K562 (cell line): ENCODE measurements at regions of chr2 and their contacts with region 1.

Region 1: GRCh38 chr2:157302492-157303099 is 23.0 kb downstream of the ERMN start:
- DNase-seq: peak; percentile 68 to 76 (median 71)
- ATAC-seq: peak; percentile 82
- H3K4me3 ChIP-seq: no peak overlapping the region
- H3K27ac ChIP-seq: no peak overlapping the region
- H3K4me1 ChIP-seq: peaks cover 0 to 17% of the 10 kb centered on the region in 2 experiments; a peak in 2 of 5 replicates
- H3K27me3 ChIP-seq: no peaks in the 10 kb centered on the region
- CTCF ChIP-seq: peak; percentile 76 to 92 (median 79)
- EP300 ChIP-seq: peak; percentile 30; the same call in 1 of the 2 replicates
- POLR2A ChIP-seq: no peak
- RAD21 ChIP-seq: peak; percentile 88 to 89

Region 2: DNA sequence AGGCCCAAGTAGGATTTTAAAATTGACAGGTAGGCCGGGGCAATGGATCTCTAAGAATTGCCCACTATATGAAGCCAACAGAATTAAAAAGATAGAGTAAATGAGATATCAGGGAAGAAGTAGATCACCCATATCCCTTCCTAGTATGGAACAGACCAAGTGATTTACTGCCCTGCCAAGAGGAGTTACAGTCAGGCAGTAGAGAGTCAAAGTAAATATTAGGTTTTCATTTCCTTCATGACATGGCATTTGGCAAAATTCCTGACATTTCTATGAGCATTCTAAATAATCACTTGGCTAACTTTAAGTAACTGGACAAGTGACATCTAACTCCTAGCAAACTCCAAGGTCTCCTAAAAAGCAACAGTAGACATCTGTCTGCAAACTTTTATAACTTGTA is 11.6 kb before region 1 on chr2:
- CTCF ChIA-PET with region 1: no interaction called
- POLR2A ChIA-PET with region 1: interaction called, 10 read pairs
- in situ Hi-C with region 1: no loop called
- intact Hi-C with region 1: no loop called
- DNase-seq: no peak
- ATAC-seq: no peak
- H3K4me3 ChIP-seq: no peak overlapping the region
- H3K27ac ChIP-seq: no peak overlapping the region
- H3K4me1 ChIP-seq: peaks cover 0 to 3% of the 10 kb centered on the region in 2 experiments; a peak in 2 of 5 replicates
- H3K27me3 ChIP-seq: no peaks in the 10 kb centered on the region
- CTCF ChIP-seq: no peak
- EP300 ChIP-seq: no peak
- POLR2A ChIP-seq: no peak
- RAD21 ChIP-seq: no peak

Region 3: DNA sequence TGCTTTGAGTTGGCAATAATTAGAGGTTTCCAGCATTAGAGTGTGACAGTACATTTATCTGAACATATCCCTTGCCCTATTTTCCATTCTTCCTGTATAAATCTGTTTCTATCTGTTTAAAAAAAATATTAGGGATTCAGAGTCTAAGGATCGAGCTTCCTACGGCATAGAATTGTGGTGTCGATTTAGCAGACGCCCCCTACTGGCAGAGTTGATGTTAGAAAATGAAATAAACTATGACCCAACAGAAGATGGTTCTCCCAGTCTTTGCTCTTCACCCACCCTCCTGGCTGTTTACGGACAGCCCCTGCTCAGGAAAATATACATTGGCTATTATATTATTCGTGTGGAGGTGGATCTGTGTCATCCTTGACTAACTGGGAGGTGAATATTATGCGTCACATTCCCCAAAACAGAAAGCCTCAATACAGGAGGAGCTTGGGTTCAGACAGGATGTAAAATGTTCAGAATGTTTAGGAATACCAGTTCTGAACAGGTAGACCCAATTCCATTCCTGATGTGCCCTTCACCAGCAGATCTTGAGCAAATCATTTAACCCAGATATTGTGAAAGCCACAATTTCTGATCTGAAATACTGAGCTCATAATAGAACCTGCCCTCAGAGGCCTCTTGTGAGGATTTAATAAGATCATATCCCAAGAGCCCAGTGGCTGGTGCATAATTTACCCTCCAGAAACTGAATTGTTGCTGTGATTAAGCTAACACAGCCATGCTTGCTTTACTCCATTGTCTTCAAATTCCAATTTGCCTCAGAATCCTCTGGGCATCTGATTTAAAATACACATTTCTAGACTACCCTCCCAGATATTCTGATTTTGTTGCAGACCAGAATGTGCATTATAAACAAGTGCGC is 33.8 kb after region 1 on chr2:
- CTCF ChIA-PET with region 1: interaction called, 11 read pairs
- POLR2A ChIA-PET with region 1: interaction called, 3 read pairs
- in situ Hi-C with region 1: no loop called
- intact Hi-C with region 1: loop called (anchors 1 kb)
- DNase-seq: peak; percentile 53 to 77 (median 68)
- ATAC-seq: peak; percentile 90
- H3K4me3 ChIP-seq: no peak overlapping the region
- H3K27ac ChIP-seq: no peak overlapping the region
- H3K4me1 ChIP-seq: no peaks in the 10 kb centered on the region
- H3K27me3 ChIP-seq: 0 out of 5 replicates have a peak, but pooled peaks cover 0 to 3% of the 10 kb centered on the region in 2 experiments
- CTCF ChIP-seq: peak; percentile 58 to 79 (median 74); a peak in 5 of 6 replicates
- EP300 ChIP-seq: no peak
- POLR2A ChIP-seq: no peak
- RAD21 ChIP-seq: peak; percentile 38 to 60; a peak in 3 of 4 replicates

Region 4: GRCh38 chr2:157596992-157597681 is 294.5 kb after region 1 on chr2:
- CTCF ChIA-PET with region 1: interaction called, 4 read pairs
- POLR2A ChIA-PET with region 1: no interaction called
- in situ Hi-C with region 1: no loop called
- intact Hi-C with region 1: loop called (anchors 5 kb)
- DNase-seq: peak in 2 of 4 experiments; percentile 34 to 38
- ATAC-seq: peak; percentile 90
- H3K4me3 ChIP-seq: no peak overlapping the region
- H3K27ac ChIP-seq: no peak overlapping the region
- H3K4me1 ChIP-seq: peaks cover 0 to 5% of the 10 kb centered on the region in 2 experiments; a peak in 1 of 5 replicates
- H3K27me3 ChIP-seq: peaks cover 0 to 9% of the 10 kb centered on the region in 2 experiments; a peak in 4 of 5 replicates
- CTCF ChIP-seq: peak; percentile 56 to 63 (median 60)
- EP300 ChIP-seq: no peak
- POLR2A ChIP-seq: no peak
- RAD21 ChIP-seq: peak in 1 of 2 experiments; percentile 60; a peak in 2 of 4 replicates